ENCODE measurements at regions of chr1 and their contacts with region 1.

Region 1: GRCh38 chr1:201559679-201560162 is 20.8 kb downstream of the NAV1 start:
- DNase-seq: peak; percentile 9
- ATAC-seq: peak; percentile 99
- H3K4me3 ChIP-seq: no peak overlapping the region
- H3K27ac ChIP-seq: no peak overlapping the region
- H3K4me1 ChIP-seq: no peaks in the 10 kb centered on the region
- H3K27me3 ChIP-seq: peaks cover 0 to 1% of the 10 kb centered on the region in 2 experiments; a peak in 2 of 4 replicates
- CTCF ChIP-seq: peak; percentile 94 to 96 (median 96)
- EP300 ChIP-seq: no peak
- POLR2A ChIP-seq: no peak
- RAD21 ChIP-seq: peak; percentile 92

Region 2: GRCh38 chr1:201530741-201531531 is 28.8 kb before region 1 on chr1:
- CTCF ChIA-PET with region 1: interaction called, 15 read pairs
- POLR2A ChIA-PET with region 1: no interaction called
- RAD21 ChIA-PET with region 1: interaction called, 5 read pairs
- SMC1A ChIA-PET with region 1: no interaction called
- in situ Hi-C with region 1: no loop called
- intact Hi-C with region 1: no loop called
- DNase-seq: no peak
- ATAC-seq: peak; percentile 90
- H3K4me3 ChIP-seq: no peak overlapping the region
- H3K27ac ChIP-seq: no peak overlapping the region
- H3K4me1 ChIP-seq: no peaks in the 10 kb centered on the region
- H3K27me3 ChIP-seq: no peaks in the 10 kb centered on the region
- CTCF ChIP-seq: peak; percentile 72 to 83 (median 75)
- EP300 ChIP-seq: no peak
- POLR2A ChIP-seq: no peak
- RAD21 ChIP-seq: peak; percentile 64

Region 3: GRCh38 chr1:201593200-201593921 is 33.6 kb after region 1 on chr1:
- CTCF ChIA-PET with region 1: no interaction called
- POLR2A ChIA-PET with region 1: no interaction called
- RAD21 ChIA-PET with region 1: no interaction called
- SMC1A ChIA-PET with region 1: no interaction called
- in situ Hi-C with region 1: no loop called
- intact Hi-C with region 1: no loop called
- DNase-seq: no peak
- ATAC-seq: no peak
- H3K4me3 ChIP-seq: no peak overlapping the region
- H3K27ac ChIP-seq: no peak overlapping the region
- H3K4me1 ChIP-seq: no peaks in the 10 kb centered on the region
- H3K27me3 ChIP-seq: peaks cover 0 to 8% of the 10 kb centered on the region in 2 experiments; a peak in 3 of 4 replicates
- CTCF ChIP-seq: no peak
- EP300 ChIP-seq: no peak
- POLR2A ChIP-seq: no peak
- RAD21 ChIP-seq: no peak

Region 4: GRCh38 chr1:201703621-201704439 is 144.1 kb after region 1 on chr1:
- CTCF ChIA-PET with region 1: interaction called, 154 read pairs
- POLR2A ChIA-PET with region 1: no interaction called
- RAD21 ChIA-PET with region 1: interaction called, 31 read pairs
- SMC1A ChIA-PET with region 1: interaction called, 15 read pairs
- in situ Hi-C with region 1: loop called (anchors 5 kb)
- intact Hi-C with region 1: loop called (anchors 1 kb)
- DNase-seq: no peak
- ATAC-seq: peak; percentile 99
- H3K4me3 ChIP-seq: no peak overlapping the region
- H3K27ac ChIP-seq: no peak overlapping the region
- H3K4me1 ChIP-seq: no peaks in the 10 kb centered on the region
- H3K27me3 ChIP-seq: no peaks in the 10 kb centered on the region
- CTCF ChIP-seq: peak; percentile 83 to 93 (median 93)
- EP300 ChIP-seq: no peak
- POLR2A ChIP-seq: no peak
- RAD21 ChIP-seq: peak; percentile 82

Region 5: GRCh38 chr1:201709564-201710295 is 150.0 kb after region 1 on chr1:
- CTCF ChIA-PET with region 1: interaction called, 154 read pairs
- POLR2A ChIA-PET with region 1: no interaction called
- RAD21 ChIA-PET with region 1: interaction called, 31 read pairs
- SMC1A ChIA-PET with region 1: interaction called, 15 read pairs
- in situ Hi-C with region 1: loop called (anchors 5 kb)
- intact Hi-C with region 1: loop called (anchors 1 kb)
- DNase-seq: no peak
- ATAC-seq: peak; percentile 99
- H3K4me3 ChIP-seq: no peak overlapping the region
- H3K27ac ChIP-seq: no peak overlapping the region
- H3K4me1 ChIP-seq: peaks cover 4% of the 10 kb centered on the region; the same call in 1 of the 2 replicates
- H3K27me3 ChIP-seq: no peaks in the 10 kb centered on the region
- CTCF ChIP-seq: peak; percentile 80 to 97 (median 85)
- EP300 ChIP-seq: no peak
- POLR2A ChIP-seq: no peak
- RAD21 ChIP-seq: peak; percentile 79

Region 6: GRCh38 chr1:201783572-201783971 is 223.9 kb after region 1 on chr1:
- CTCF ChIA-PET with region 1: interaction called, 103 read pairs
- POLR2A ChIA-PET with region 1: no interaction called
- RAD21 ChIA-PET with region 1: no interaction called
- SMC1A ChIA-PET with region 1: no interaction called
- in situ Hi-C with region 1: loop called (anchors 10 kb)
- intact Hi-C with region 1: no loop called
- DNase-seq: no peak
- ATAC-seq: no peak
- H3K4me3 ChIP-seq: no peak overlapping the region
- H3K27ac ChIP-seq: no peak overlapping the region
- H3K4me1 ChIP-seq: no peaks in the 10 kb centered on the region
- H3K27me3 ChIP-seq: peaks cover 0 to 3% of the 10 kb centered on the region in 2 experiments; a peak in 2 of 4 replicates
- CTCF ChIP-seq: 0 out of 6 replicates have a peak, but pooled peaks of 1 of the 3 experiments have one; percentile 2
- EP300 ChIP-seq: no peak
- POLR2A ChIP-seq: no peak
- RAD21 ChIP-seq: peak; percentile 16; the same call in 1 of the 2 replicates

Region 7: DNA sequence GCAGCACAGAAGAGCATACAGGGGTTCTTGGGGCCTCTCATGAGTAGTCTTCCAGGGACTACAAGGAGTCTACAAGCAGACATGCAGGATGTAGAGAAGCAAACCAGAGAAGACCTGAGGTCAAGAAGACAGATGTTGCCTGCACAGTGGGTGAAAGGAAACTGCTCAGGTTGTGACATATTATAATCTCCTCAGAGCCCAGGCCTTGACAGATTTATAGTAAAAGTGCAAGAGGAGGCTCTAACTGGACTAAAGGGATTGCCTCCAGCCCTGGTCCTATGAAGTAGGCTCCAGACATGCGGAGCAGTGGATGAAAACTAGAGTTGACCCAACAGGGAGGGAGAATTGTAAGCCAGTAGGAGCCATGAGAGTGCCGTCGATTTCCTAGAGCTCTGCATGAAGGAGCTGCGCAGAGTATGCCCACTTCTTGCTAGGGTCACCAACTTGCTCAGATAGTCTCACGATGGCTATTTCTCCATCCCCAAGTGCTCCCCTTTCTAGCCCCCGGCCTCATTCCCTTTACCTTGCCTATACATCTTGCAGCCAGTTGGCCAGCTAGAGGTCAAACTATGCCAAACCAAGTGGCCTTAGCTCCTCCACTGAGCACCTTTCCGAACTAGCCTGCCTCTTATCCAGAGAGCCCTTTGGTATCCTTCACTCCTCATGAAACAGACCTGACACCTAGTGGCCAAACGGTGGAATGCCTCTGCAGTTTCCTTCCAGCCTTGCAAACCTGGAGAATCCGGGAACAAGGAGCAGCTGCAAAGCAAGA is 233.0 kb after region 1 on chr1:
- CTCF ChIA-PET with region 1: interaction called, 103 read pairs
- POLR2A ChIA-PET with region 1: no interaction called
- RAD21 ChIA-PET with region 1: interaction called, 17 read pairs
- SMC1A ChIA-PET with region 1: interaction called, 15 read pairs
- in situ Hi-C with region 1: loop called (anchors 10 kb)
- intact Hi-C with region 1: loop called (anchors 1 kb)
- DNase-seq: no peak
- ATAC-seq: peak; percentile 94
- H3K4me3 ChIP-seq: no peak overlapping the region
- H3K27ac ChIP-seq: no peak overlapping the region
- H3K4me1 ChIP-seq: no peaks in the 10 kb centered on the region
- H3K27me3 ChIP-seq: peaks cover 2% of the 10 kb centered on the region in 2 experiments; a peak in 3 of 4 replicates
- CTCF ChIP-seq: peak; percentile 95 to 97 (median 96); a peak in 5 of 6 replicates
- EP300 ChIP-seq: no peak
- POLR2A ChIP-seq: no peak
- RAD21 ChIP-seq: peak; percentile 96

Measured in GM12878 (cell line).